Head of caudate nucleus (tissue), 42 donors: ENCODE measurements at regions of chr12 and their contacts with region 1.

Region 1: DNA sequence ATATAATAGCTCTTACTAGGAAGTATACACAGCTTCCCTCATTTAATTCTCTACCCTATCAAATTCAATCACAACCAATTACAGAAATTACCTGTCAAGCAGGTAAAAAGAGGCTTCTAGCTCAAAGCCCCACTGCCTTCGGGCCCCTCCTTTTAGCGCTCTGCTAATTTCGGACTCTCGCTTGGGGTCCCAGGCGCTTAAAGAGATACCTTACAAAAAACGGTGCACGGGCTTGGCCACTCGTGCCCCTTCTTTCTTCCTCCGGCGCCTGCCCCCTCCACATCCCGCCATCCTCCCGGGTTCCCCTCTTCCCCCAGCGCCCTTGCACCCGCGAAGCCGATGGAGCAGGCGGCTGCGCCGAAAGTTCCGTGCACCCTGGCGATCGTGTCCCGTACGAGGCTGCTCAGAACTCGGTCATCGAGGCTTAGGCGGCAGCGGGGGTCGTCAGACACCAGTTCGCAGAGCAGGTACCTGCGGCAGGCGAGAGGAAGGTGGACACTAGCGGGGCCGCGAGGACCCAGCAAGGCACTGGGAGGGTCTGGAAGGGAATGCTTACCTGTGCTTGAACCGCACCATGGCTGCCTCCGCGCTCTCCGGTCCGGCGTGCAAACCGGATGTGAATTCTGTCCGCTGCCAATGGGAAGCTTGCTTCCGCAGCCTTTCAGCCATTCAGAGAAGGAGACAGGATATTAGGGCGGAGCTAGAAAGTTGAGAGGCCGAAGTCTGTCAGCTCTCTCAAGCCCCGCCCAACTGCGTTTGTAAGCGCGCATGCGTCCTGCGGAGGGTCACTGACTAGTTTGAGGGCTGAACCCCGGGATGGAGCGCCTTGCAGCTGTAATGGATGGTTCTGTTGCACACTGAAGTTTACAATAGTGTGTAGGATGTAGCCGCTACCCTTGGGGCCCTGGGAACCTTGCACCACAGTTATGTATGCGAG is at the start of gene POP5:
- DNase-seq: peak; percentile 95 to 99 (median 98)

Region 2: GRCh38 chr12:119308708-119309456 is 1272.2 kb before region 1 on chr12:
- intact Hi-C with region 1: no loop called
- DNase-seq: no peak

Region 3: DNA sequence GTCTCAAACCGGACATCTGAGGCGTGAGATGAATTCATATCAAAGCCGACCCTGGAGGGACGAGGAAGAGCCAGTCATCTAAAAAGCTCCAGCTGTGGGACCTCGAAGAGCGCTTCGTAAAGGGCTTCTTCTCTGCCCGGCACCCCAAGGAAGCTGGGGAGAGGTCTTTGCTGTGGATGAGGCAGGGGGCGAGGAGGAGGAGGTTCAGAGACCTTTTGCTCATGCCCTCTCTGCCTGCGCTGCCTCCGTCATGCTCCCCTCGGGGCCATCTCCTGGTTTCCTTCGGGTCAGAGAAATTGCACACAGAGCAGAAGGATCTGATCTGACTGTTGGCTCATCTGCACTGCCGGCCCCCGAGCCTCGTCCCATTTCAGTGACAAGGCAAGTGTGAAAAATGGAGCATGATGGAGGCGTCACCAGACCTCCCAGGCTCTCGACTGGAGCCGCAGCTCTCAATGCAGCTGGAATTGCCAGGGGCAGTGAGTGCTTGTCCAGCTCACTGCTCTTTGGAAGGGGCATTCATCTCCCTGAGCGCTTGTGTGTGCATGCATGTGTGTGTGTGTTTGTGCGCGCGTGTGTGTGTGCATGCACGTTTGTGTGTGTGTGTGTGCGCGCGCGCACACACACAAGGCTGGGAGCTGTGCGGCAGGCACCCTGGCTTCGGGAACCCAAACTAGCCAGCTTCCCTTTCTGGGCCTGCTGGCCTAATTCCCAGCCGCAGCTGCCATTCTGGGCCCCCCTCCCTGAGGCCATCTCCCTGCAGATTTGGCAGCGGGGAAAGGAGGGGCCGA is 68.6 kb after region 1 on chr12:
- intact Hi-C with region 1: loop called (anchors 2 kb)
- DNase-seq: peak in 16 of 42 donors; percentile 16 to 60 (median 36)

Region 4: GRCh38 chr12:120686690-120687577 is 105.9 kb after region 1 on chr12 and contains the start of gene MLEC:
- intact Hi-C with region 1: loop called (anchors 5 kb)
- DNase-seq: peak; percentile 96 to 100 (median 99)

Region 5: DNA sequence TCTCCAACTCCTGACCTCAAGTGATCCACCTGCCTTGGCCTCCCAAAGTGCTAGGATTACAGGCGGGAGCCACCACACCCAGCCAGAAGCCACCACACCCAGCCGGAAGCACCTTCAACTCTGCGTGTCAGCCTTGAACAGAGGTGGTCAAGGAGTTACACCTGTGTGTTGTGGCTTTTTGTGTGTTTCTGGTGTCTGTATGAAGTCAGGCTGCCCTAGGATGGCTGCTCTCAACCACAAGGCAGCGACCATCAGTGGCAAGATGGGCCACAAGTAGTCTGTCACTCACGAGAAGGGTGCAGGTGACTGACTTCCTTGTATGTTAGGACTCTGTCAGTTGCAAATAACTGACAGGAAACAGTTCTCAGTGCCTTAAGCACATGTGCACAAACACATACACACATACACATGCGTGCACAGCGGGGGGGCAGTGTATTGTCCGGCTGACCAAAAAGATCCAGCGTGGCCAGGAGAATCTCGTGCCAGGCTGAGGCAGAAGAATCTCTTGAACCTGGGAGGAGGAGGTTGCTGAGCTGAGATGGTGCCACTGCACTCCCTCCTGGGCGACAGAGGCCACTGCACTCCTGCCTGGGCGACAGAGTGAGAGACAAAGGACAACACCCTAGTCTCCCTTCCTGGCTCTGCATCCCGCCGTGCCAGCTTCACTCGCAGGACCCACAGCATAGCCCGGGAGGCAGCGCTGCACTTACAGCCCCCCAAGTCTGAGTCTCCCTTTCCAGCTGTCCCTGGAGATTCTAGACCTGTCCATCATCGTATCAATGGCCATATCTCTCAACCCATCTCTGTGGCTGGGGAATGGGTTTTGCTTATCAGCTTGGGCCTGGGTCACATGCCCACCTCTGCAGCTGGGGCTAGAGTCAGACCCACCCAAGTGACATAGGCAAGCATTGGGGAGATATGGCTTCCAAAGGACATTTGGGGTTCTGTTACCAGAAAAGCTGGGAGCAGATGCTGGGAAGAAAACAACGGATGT is 642.5 kb after region 1 on chr12:
- intact Hi-C with region 1: no loop called
- DNase-seq: no peak